ACHN (cell line): ENCODE measurements at regions of chr12 and their contacts with region 1.

Region 1: GRCh38 chr12:52032804-52033502 is 18.3 kb upstream of the NR4A1 start:
- DNase-seq: peak; percentile 99

Region 2: DNA sequence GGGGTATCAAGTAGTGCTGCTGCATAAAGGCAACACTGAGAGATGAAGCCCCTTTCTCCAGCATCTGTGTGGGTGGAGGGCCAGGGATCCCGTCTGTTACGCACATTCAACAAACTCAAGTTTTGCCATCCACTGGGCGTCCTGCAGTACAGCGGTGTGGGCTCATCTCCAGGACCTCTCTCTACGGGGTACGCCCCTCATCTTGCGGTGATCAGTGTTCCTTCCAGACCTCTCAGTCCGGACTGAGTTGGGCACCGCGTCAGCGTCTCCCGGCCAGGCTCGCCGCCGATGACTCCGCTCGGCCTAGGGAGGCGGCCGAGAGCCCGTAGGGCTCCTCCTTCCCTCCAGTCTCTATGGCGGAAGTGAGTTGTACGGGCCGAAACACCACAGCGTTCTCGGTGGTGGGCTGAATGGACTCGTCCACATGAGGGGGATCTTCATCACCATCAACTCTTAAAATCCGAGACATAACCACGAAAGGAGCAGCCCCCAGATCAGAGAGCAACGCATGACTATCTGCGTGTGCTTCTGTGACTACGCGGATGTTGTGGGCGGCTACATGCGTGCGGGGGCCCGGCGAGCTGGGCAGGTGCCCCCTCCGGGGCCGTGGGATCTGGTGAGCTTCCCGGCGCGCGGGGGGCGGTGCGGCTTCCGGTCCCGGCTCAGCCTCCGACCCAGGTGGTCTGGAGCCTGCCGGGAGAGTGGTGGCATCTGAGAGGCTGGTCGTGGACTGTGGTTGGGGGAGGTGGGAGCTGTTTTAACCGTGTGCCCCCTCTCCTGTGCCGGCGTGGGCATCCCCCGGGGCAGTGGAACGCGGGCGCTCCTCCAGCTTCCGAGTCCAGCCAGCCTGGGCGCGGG is 36.6 kb after region 1 on chr12 and contains the start of gene ATG101:
- in situ Hi-C with region 1: no loop called
- DNase-seq: peak; percentile 99

Region 3: GRCh38 chr12:52119398-52120254 is 86.7 kb after region 1 on chr12:
- in situ Hi-C with region 1: loop called (anchors 5 kb)
- DNase-seq: peak; percentile 30